Motor neuron (in vitro differentiated cells): ENCODE measurements at regions of chr2 and their contacts with region 1.

Region 1: GRCh38 chr2:8681786-8682692 is at the start of gene ID2:
- ATAC-seq: peak; percentile 61 to 80 (median 72)
- H3K4me3 ChIP-seq: peak within 1 kb of the TSS; percentile 47 to 68 (median 53)
- H3K27ac ChIP-seq: peak within 1 kb of the TSS in 1 of 2 donors; percentile 47
- H3K4me1 ChIP-seq: peaks cover 26 to 32% of the 10 kb centered on the region in 2 donors
- total RNA-seq, gene ID2: 6.2 to 91.6 (median 38.9) TPM

Region 2: DNA sequence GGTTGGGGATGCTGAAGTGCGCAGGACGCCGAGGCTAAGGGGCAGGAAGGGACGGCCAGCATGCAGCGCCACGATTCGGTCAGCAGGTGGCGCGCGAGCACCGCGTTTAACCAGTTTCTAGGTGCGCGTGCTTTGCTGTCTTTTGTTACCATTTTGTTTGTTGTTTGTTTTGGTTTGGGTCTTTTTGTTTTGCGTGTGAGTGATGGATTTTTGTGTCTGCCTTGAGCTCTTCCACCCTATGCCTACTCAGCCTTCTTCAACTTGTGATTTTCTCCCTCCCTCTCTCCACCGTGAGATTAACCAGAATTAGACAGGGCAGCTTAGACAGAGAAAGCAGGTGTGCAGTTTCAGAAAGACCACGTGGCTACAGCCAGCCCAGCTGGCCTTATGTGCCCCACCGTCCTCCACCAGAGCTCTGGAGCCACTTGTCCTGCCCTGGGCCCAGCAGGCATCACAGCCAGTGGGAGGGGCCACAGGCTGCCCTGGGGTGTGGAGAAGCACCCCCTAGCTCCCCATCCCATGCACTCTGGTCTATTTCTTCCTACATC is 1584.6 kb before region 1 on chr2:
- in situ Hi-C with region 1: loop called in 5 of 9 experiments (anchors 10 to 25 kb)
- ATAC-seq: peak; percentile 85 to 97 (median 95)
- H3K4me3 ChIP-seq: peak overlapping the region in 1 of 5 donors; percentile 10
- H3K27ac ChIP-seq: no peak overlapping the region
- H3K4me1 ChIP-seq: peaks cover 0 to 4% of the 10 kb centered on the region in 2 donors

Region 3: GRCh38 chr2:7118606-7119503 is 1563.2 kb before region 1 on chr2:
- in situ Hi-C with region 1: loop called in 3 of 9 experiments (anchors 25 kb)
- ATAC-seq: peak; percentile 56 to 79 (median 70)
- H3K4me3 ChIP-seq: no peak overlapping the region
- H3K27ac ChIP-seq: no peak overlapping the region
- H3K4me1 ChIP-seq: peaks cover 0 to 3% of the 10 kb centered on the region in 2 donors

Region 4: DNA sequence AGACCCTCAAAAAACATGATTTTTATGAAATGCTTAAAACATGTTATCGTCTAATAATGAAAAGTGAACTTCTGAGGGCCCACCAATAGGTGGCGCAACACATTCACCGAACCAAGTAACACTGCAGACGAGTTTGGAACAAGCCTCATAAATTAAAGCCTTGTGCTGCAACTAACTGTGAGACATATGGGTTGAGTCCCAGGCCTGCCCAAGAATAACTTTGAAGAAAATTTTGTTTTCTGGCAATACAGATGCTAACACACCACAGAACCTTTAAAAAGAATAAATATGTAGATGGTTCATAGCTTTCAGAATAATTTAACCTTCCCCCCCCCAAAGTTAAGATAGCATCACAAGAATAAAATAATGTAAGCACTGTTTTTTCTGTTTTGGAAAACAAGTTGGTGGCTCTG is 1479.0 kb before region 1 on chr2:
- in situ Hi-C with region 1: loop called in 2 of 9 experiments (anchors 25 kb)
- ATAC-seq: peak; percentile 63 to 78 (median 69)
- H3K4me3 ChIP-seq: no peak overlapping the region
- H3K27ac ChIP-seq: no peak overlapping the region
- H3K4me1 ChIP-seq: peaks cover 0 to 16% of the 10 kb centered on the region in 2 donors

Region 5: DNA sequence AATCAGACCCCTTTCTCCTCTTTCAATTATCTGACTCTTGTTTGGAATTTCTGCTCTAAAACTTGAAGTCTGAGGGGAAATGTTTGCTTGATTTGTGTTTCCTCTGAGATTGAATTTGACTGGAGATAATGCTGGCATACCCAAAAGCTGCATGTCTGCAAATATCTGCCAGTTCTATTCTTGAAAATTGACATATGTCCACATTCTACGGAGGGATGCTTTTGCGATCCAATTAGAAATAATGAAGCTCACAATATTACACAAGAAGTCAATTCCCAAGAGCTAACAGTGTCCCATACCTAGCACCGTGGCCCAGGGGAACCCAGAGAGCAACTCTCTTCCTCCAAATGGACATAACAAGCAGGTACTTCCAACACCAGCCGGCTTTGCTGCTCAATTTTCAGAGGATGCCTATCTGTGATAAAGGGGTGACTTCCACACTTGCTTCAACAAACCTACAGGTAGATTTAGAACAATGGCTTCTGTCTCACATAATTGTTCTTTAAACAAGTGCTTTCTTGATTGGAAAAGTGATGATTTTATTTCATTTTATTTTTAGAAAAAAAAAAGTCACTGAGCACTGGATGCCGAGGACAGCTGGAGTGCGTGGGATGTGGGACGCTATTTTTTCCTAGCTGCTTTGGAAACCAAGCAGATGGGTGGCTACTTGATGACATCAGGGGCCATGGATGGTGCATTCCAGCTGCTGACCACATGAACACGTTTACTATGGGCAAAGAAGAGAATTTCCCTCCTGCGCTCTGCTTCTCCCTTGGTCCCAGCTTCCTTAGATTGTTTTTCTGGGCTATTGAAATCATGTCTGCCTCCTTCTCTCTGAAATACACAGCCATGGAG is 1276.0 kb before region 1 on chr2:
- in situ Hi-C with region 1: loop called in 2 of 9 experiments (anchors 25 kb)
- ATAC-seq: no peak
- H3K4me3 ChIP-seq: no peak overlapping the region
- H3K27ac ChIP-seq: no peak overlapping the region
- H3K4me1 ChIP-seq: peaks cover 0 to 2% of the 10 kb centered on the region in 2 donors

Region 6: GRCh38 chr2:7427293-7428060 is 1254.6 kb before region 1 on chr2:
- in situ Hi-C with region 1: loop called (anchors 10 to 25 kb)
- ATAC-seq: peak in 6 of 8 experiments; percentile 32 to 67 (median 56)
- H3K4me3 ChIP-seq: no peak overlapping the region
- H3K27ac ChIP-seq: no peak overlapping the region
- H3K4me1 ChIP-seq: peaks cover 0 to 5% of the 10 kb centered on the region in 2 donors

Region 7: GRCh38 chr2:7725171-7725849 is 956.7 kb before region 1 on chr2:
- in situ Hi-C with region 1: no loop called
- ATAC-seq: no peak
- H3K4me3 ChIP-seq: no peak overlapping the region
- H3K27ac ChIP-seq: no peak overlapping the region
- H3K4me1 ChIP-seq: peaks cover 7 to 8% of the 10 kb centered on the region in 2 donors

Region 8: DNA sequence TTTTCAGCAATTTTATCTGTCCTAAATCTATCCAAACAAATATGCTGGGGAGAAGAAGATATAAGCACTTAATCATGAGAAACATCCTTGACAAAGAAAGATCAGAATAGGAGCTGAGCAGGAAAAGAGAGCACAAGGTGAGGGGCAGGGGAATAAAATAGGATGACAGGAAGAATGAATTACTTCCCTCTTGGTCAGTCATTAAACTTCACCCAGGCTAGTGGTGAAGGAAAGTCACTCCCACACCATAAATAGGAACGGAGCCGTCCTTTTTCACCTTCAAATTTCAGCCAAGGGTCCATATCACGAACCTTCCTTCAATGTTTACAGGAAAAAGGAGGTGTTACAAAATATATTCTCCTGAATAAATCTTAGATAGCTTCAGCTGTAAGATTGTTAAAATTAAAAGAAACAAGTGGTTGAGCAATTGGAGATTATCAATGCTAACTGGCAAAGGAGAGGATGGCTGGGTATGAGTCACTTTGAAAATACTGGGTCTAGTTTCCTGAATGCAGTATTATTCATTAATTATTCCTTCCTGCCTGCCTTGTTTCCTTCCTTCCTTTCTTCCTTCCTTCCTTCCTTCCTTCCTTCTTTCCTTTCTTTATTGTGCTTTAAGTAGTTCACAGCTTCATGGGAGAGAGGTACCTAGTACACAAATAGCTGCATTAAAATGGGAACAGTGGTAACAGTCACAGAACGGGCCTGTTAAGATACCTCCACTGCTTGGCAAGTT is 292.5 kb before region 1 on chr2:
- in situ Hi-C with region 1: no loop called
- ATAC-seq: peak in 4 of 8 experiments; percentile 25 to 74 (median 72)
- H3K4me3 ChIP-seq: no peak overlapping the region
- H3K27ac ChIP-seq: no peak overlapping the region
- H3K4me1 ChIP-seq: peaks cover 13 to 16% of the 10 kb centered on the region in 2 donors